Heart right ventricle (tissue), 16 donors: ENCODE measurements at regions of chr12 and their contacts with region 1.

Region 1: GRCh38 chr12:4538207-4539160 is at the start of gene RAD51AP1:
- DNase-seq: peak; percentile 94 to 95
- ATAC-seq: peak; percentile 100
- H3K4me3 ChIP-seq: peak within 1 kb of the TSS; percentile 61 to 92 (median 72)
- H3K27ac ChIP-seq: peak within 1 kb of the TSS; percentile 90 to 99 (median 93)
- H3K4me1 ChIP-seq: peaks cover 3 to 32% (median 18%) of the 10 kb centered on the region in 9 donors
- H3K27me3 ChIP-seq: no peaks in the 10 kb centered on the region
- CTCF ChIP-seq: no peak
- total RNA-seq, gene RAD51AP1: 0.35 to 3.4 (median 1.2) TPM

Region 2: DNA sequence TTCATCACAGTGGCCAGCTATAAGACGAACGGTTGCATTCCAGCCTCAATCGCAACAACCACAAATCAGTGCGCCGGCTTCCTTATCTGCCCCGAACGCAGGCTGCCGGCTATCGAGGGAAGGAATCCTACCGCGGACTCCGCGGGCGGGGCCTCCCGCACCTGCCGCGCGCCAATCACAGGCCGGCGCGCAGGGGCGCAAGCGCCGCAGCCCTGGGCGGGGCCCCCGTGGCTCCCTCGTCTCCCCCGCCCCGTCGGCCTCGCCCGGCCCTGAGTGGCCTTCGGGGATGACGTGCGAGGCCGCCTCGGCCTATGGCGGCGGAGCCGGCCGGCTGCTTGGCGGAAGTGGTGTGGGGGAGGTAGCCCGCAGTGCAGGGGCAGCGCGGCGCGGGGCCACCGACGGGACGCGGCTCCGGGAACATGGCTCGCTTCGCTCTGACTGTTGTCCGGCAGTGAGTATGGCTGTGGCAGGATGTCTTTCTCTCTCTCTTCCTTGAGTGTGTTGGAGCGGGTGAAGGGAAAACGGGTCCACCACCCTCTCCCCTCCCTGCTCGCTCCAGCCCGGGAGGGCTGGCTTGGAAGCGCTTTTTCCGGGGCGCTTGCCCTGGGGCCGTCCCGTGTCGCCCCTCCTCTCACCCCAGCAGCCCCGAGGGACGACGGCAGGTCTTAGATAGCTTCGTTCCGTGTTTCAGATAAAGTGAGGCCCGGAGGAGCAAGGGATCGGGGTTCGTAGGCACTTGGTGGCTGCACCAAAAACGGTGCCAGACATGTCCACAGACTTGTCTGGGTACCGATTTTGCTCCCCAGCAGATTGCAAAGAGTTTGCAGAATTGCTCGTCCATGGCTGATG is 217.4 kb before region 1 on chr12 and contains the start of gene TIGAR:
- intact Hi-C with region 1: loop called in 1 of 10 experiments (anchors 5 kb)
- DNase-seq: peak; percentile 91 to 94
- ATAC-seq: peak; percentile 99 to 100 (median 100)
- H3K4me3 ChIP-seq: peak within 1 kb of the TSS; percentile 66 to 95 (median 84)
- H3K27ac ChIP-seq: peak within 1 kb of the TSS; percentile 33 to 94 (median 90)
- H3K4me1 ChIP-seq: peaks cover 0 to 36% (median 21%) of the 10 kb centered on the region in 9 donors
- H3K27me3 ChIP-seq: no peaks in the 10 kb centered on the region
- CTCF ChIP-seq: no peak
- total RNA-seq, gene TIGAR: 10.9 to 15.5 (median 13.7) TPM

Region 3: GRCh38 chr12:4653257-4653656 is 114.8 kb after region 1 on chr12:
- intact Hi-C with region 1: loop called in 1 of 10 experiments (anchors 10 kb)
- DNase-seq: no peak
- ATAC-seq: no peak
- H3K4me3 ChIP-seq: no peak overlapping the region
- H3K27ac ChIP-seq: no peak overlapping the region
- H3K4me1 ChIP-seq: peaks cover 4 to 46% (median 34%) of the 10 kb centered on the region in 9 donors
- H3K27me3 ChIP-seq: no peaks in the 10 kb centered on the region
- CTCF ChIP-seq: no peak